Activated CD4-positive, alpha-beta T cell treated with anti-CD3 and anti-CD28 coated beads, Interleukin-2, amount 10 ng/mL, durations not matched to agents 24 days and 14 days (primary cell): ENCODE measurements at regions of chr14 and their contacts with region 1.

Region 1: DNA sequence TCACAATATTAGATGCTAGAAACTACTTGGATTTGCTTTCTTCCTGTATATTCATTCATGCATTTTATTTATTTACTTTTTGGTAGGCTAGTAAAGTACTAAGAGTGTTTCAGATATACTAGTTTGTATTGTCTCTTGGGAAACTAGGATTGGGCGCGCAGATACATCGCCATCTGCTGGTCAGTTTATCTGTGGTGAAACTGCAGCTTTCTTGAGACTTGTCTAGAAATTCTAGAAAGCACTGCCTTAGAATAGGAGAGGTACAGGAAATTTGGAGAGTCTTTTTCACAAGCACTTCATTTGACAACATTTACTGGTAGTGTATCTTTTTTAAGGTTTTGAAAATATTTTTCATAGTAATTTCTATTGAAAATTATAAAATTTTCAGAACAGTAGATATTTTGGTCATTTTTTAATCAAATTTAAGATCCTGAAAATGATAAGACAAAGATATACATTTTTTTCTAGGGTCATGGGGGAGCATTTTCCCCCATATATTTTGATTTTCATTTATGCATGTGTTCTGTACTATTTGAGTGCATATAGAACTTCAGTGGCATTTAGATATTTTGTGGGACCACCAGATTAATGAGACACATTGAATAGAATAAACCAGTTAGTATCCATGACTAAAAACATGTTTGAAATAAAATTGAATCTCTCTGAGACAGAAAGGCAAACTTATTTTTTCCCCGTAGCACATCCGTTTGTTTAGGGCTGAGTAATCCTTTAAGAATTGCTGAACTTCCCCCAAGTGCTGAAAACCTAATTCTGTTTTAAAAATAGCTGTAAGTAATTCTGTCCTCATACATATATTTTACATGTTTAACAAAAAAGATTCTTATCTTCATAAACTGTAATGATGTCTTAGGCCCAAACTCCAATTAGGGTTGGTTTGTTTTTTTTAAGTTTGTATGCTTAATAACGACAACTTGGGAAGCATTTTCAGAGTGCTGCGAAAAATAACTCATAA is 44.5 kb downstream of the SLC38A6 start:
- DNase-seq: peak; percentile 87
- H3K4me3 Mint-ChIP-seq: no peak overlapping the region
- H3K27ac Mint-ChIP-seq: no peak overlapping the region
- H3K4me1 Mint-ChIP-seq: no peaks in the 10 kb centered on the region
- H3K27me3 Mint-ChIP-seq: peaks cover 2% of the 10 kb centered on the region

Region 2: DNA sequence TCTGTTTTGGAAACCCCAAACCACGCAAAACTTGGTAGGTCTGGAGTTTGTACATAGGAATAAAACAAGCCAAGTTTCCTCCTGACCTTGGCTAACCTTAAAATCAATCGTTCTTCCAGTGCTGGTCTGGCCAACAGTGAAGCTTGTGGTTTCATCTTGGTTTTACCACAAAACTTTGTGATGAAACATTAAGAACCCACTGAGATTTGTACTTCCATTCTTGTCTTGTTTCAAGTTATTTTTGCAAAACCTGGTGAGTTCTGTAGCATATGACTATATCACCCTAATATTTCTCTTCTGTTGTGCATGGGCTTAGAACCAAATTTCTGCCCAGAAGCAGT is 402.6 kb before region 1 on chr14:
- intact Hi-C with region 1: loop called (anchors 1 kb)
- DNase-seq: no peak
- H3K4me3 Mint-ChIP-seq: no peak overlapping the region
- H3K27ac Mint-ChIP-seq: no peak overlapping the region
- H3K4me1 Mint-ChIP-seq: no peaks in the 10 kb centered on the region
- H3K27me3 Mint-ChIP-seq: peaks cover 22% of the 10 kb centered on the region

Region 3: DNA sequence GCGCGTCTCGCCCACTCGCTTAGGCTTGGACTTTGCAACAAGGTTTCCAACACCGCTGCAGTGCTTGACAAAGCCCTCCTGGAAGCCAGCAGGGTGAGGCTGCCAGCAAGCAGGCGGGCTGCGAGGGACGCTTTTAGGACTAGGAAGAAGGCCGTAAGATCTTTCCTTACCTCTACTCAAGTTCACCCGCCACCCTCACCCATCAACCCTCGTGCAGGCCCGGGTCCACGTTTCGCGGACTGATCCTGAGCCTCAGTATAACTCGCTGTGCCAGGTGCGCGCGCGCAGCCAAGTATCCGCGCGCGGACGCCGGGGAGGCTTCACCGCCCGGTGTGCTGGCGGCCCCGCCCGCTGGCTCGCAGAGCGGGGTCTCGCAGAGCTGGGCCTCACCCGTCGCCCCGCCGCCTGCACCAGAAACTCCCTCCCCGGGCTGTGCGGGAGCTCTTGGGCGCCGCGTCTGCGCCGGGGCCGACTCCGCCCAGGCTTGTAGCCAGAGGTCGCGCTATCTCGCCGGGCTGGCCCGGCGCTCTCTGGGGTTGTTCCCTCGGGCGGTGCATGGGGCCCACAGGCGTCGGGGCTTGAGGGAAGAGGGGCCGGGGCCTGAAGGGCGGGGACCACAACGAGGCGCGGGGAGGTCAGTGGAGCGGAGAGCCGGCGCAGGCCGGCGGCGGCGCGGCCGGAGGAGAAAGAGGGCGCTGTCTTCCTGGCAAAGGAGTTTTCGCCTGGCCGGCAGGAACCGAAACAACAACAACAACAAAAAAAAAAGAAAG is 368.7 kb before region 1 on chr14:
- intact Hi-C with region 1: loop called (anchors 1 kb)
- DNase-seq: peak; percentile 81
- H3K4me3 Mint-ChIP-seq: peak overlapping the region; percentile 88
- H3K27ac Mint-ChIP-seq: peak overlapping the region; percentile 41
- H3K4me1 Mint-ChIP-seq: peaks cover 34% of the 10 kb centered on the region
- H3K27me3 Mint-ChIP-seq: peaks cover 84% of the 10 kb centered on the region

Region 4: DNA sequence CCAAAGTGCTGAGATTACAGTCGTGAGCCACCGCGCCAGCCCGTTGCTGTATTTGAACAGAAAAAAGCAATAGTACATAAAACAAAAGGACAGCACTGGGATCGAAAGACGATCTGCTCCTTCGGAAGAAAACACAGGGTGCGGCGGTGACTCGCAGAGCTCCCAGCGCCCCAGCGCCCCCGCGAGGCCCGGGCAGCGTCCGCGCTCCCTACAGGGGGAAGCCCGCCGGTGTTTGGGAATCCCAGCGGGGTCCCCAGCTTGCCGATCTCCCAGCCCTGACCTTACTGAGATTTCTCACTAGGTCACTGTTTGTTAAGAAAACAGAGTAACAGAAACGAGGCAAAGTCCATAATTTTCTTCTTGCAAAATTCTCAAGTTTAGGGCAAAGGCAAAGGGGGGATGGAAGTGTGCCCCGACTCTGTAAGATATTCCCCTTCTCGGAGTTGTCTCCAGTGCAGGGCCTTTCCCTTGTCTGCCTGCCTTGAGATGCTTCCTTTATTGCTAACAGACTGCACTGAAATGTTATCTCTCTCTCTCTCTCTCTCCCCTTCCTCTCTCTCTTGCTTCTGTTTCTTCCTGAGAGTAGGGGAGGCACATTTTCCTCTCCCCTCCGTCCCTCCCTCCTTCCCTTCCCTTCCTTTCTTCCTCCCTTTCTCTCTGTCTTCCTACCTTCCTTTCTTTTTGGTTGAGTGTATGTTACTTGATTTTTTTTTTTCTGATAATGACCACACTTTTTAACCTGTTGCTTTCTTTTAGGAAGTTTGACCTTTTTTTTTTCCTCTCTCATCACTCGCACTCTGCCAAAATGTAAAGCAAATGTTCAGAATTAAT is 163.7 kb after region 1 on chr14:
- intact Hi-C with region 1: loop called (anchors 10 kb)
- DNase-seq: peak; percentile 78
- H3K4me3 Mint-ChIP-seq: peak overlapping the region; percentile 72
- H3K27ac Mint-ChIP-seq: peak overlapping the region; percentile 22
- H3K4me1 Mint-ChIP-seq: peaks cover 18% of the 10 kb centered on the region
- H3K27me3 Mint-ChIP-seq: peaks cover 42% of the 10 kb centered on the region